MCF 10A (cell line): ENCODE measurements at regions of chr1 and their contacts with region 1.

Region 1: GRCh38 chr1:92784639-92785500 is at the start of gene EVI5:
- DNase-seq: peak; percentile 96
- H3K4me3 Mint-ChIP-seq: peak within 1 kb of the TSS; percentile 87
- H3K27ac Mint-ChIP-seq: peak within 1 kb of the TSS; percentile 96
- H3K4me1 Mint-ChIP-seq: peaks cover 10% of the 10 kb centered on the region
- H3K27me3 Mint-ChIP-seq: no peaks in the 10 kb centered on the region
- CTCF ChIP-seq: no peak
- total RNA-seq, gene EVI5: 23.2 and 25.0 TPM in 2 replicates

Region 2: DNA sequence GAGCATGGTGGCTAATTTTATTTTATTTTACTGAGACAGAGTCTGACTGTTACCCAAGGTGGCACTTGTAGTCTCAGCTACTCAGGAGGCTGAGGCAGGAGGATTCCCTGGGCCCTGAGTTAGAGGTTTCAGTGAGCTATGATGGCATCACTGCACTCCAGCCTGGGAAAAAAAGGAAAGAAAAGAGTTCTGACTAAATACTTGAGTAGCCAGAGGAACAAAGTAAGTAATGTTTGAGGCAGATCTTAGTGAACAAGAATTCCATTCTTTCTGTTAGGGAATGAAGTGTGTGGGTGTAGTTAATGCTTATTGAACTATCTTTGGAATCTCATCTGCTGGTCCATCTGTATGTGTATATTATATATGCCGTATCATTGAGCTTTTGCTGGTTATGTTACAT is 13.1 kb after region 1 on chr1:
- CTCF ChIA-PET with region 1: interaction called, 8 read pairs
- POLR2A ChIA-PET with region 1: interaction called, 13 read pairs
- intact Hi-C with region 1: no loop called
- DNase-seq: no peak
- H3K4me3 Mint-ChIP-seq: no peak overlapping the region
- H3K27ac Mint-ChIP-seq: no peak overlapping the region
- H3K4me1 Mint-ChIP-seq: no peaks in the 10 kb centered on the region
- H3K27me3 Mint-ChIP-seq: no peaks in the 10 kb centered on the region
- CTCF ChIP-seq: no peak

Region 3: GRCh38 chr1:92804721-92805169 is 19.9 kb after region 1 on chr1:
- CTCF ChIA-PET with region 1: no interaction called
- POLR2A ChIA-PET with region 1: interaction called, 14 read pairs
- intact Hi-C with region 1: no loop called
- DNase-seq: peak; percentile 77
- H3K4me3 Mint-ChIP-seq: no peak overlapping the region
- H3K27ac Mint-ChIP-seq: no peak overlapping the region
- H3K4me1 Mint-ChIP-seq: peaks cover 18% of the 10 kb centered on the region
- H3K27me3 Mint-ChIP-seq: no peaks in the 10 kb centered on the region
- CTCF ChIP-seq: no peak

Region 4: DNA sequence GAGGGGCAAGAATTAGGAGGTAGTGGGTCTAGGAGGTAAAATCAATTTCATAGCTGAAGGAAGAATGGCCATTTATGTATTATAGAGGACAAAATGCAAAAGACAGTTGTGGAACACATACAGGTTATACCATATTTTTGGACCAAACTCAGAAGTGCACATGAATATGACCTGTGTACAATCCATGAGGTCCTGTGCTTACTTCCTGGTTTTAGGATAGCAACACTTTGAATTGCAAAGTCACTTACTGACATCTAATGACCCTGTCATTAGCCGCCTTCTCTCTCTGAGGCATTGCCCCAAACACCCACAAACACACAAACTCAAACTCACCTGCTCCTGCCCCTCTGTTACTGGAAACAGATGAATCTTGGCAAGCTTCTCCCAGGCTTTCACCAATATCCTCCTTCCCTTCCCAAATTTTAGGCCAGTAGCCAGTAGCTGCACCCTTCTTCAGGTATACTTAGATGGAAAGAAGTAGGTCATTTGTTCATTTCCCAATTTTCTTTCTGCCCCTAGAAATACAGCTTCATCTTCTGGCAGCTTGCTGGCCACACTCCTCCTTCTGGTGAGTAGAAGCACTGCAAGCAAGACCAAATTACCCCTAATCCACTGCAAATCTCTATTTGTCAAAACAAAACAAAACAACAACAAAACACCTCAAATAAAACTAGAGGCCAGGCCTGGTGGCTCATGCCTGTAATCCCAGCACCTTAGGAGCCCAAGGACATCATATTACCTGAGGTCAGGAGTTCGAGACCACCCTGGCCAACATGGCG is 33.3 kb after region 1 on chr1:
- CTCF ChIA-PET with region 1: interaction called, 4 read pairs
- POLR2A ChIA-PET with region 1: interaction called, 3 read pairs
- intact Hi-C with region 1: loop called (anchors 2 kb)
- DNase-seq: peak; percentile 39
- H3K4me3 Mint-ChIP-seq: no peak overlapping the region
- H3K27ac Mint-ChIP-seq: no peak overlapping the region
- H3K4me1 Mint-ChIP-seq: peaks cover 4% of the 10 kb centered on the region
- H3K27me3 Mint-ChIP-seq: no peaks in the 10 kb centered on the region
- CTCF ChIP-seq: peak; percentile 71

Region 5: GRCh38 chr1:94033849-94034248 is 1249.0 kb after region 1 on chr1:
- CTCF ChIA-PET with region 1: no interaction called
- POLR2A ChIA-PET with region 1: no interaction called
- intact Hi-C with region 1: no loop called
- DNase-seq: no peak
- H3K4me3 Mint-ChIP-seq: no peak overlapping the region
- H3K27ac Mint-ChIP-seq: no peak overlapping the region
- H3K4me1 Mint-ChIP-seq: peaks cover 14% of the 10 kb centered on the region
- H3K27me3 Mint-ChIP-seq: no peaks in the 10 kb centered on the region
- CTCF ChIP-seq: no peak